Heart left ventricle (tissue), 16 donors: ENCODE measurements at regions of chr19 and their contacts with region 1.

Region 1: GRCh38 chr19:4815426-4816201 is 15.9 kb downstream of the TICAM1 start:
- DNase-seq: peak; percentile 89 to 94 (median 93)
- ATAC-seq: peak; percentile 87 to 94 (median 92)
- H3K4me3 ChIP-seq: peak overlapping the region in 8 of 12 donors; percentile 0 to 44 (median 28)
- H3K27ac ChIP-seq: peak overlapping the region in 6 of 12 donors; percentile 12 to 66 (median 23)
- H3K4me1 ChIP-seq: peaks cover 0 to 36% (median 19%) of the 10 kb centered on the region in 12 donors
- H3K27me3 ChIP-seq: no peaks in the 10 kb centered on the region
- CTCF ChIP-seq: no peak
- POLR2A ChIP-seq: no peak

Region 2: GRCh38 chr19:4678881-4679815 is 136.5 kb before region 1 on chr19:
- intact Hi-C with region 1: no loop called
- DNase-seq: peak in 1 of 5 donors; percentile 37
- ATAC-seq: peak in 3 of 4 donors; percentile 25 to 28 (median 28)
- H3K4me3 ChIP-seq: no peak overlapping the region
- H3K27ac ChIP-seq: peak overlapping the region in 1 of 12 donors; percentile 57
- H3K4me1 ChIP-seq: peaks cover 0 to 10% (median 5%) of the 10 kb centered on the region in 12 donors
- H3K27me3 ChIP-seq: no peaks in the 10 kb centered on the region
- CTCF ChIP-seq: no peak
- POLR2A ChIP-seq: no peak

Region 3: DNA sequence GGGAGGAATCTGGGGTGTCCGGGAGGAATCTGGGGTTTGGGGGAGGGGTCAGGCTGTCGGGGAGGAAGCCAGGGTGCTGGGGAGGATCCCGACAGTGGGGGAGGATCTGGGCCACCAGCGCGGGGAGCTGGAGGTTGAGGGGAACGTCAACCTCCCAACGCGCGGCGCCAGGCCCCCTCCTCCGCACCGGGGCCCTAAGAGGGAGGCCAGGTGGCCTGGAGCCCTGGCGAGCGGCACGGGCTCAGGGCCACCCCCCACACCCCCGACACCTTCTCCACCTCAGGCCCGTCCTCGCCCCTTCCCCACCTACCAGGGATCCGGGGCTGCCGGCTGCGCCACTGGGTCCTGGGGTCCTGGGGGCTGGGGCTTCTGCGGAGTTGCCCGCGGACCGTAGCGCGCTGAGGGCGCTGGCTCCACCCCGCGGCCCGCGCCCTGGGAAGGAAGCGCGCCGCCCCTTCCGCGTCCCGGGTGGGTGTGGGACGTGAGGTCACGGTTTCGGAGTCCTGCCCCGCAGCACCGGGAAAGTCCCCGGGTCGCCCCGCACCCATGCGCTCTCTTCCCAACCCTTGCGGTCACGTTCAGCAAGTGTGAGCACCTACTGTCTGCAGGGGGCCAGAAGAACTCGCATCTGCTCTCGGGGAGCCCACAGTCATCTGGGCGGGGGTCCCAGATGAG is 15.8 kb after region 1 on chr19 and contains the start of gene TICAM1:
- intact Hi-C with region 1: loop called in 1 of 10 experiments (anchors 2 kb)
- DNase-seq: peak; percentile 81 to 89 (median 84)
- ATAC-seq: peak; percentile 78 to 99 (median 97)
- H3K4me3 ChIP-seq: peak within 1 kb of the TSS; percentile 74 to 99 (median 96)
- H3K27ac ChIP-seq: peak within 1 kb of the TSS; percentile 85 to 99 (median 94)
- H3K4me1 ChIP-seq: peaks cover 0 to 28% (median 13%) of the 10 kb centered on the region in 12 donors
- H3K27me3 ChIP-seq: no peaks in the 10 kb centered on the region
- CTCF ChIP-seq: peak in 3 of 12 donors; percentile 6 to 25 (median 12)
- POLR2A ChIP-seq: peak in 1 of 2 donors; percentile 82
- total RNA-seq, gene TICAM1: 3.7 to 13.6 (median 7.0) TPM

Region 4: GRCh38 chr19:4851551-4852290 is 36.1 kb after region 1 on chr19:
- intact Hi-C with region 1: loop called in 4 of 10 experiments (anchors 2 to 5 kb)
- DNase-seq: peak; percentile 66 to 87 (median 69)
- ATAC-seq: peak; percentile 69 to 87 (median 83)
- H3K4me3 ChIP-seq: no peak overlapping the region
- H3K27ac ChIP-seq: no peak overlapping the region
- H3K4me1 ChIP-seq: no peaks in the 10 kb centered on the region
- H3K27me3 ChIP-seq: no peaks in the 10 kb centered on the region
- CTCF ChIP-seq: peak; percentile 80 to 89 (median 86)
- POLR2A ChIP-seq: no peak